Activated CD8-positive, alpha-beta T cell treated with anti-CD3 and anti-CD28 coated beads for 36 hours (primary cell): ENCODE measurements at regions of chr9 and their contacts with region 1.

Region 1: GRCh38 chr9:34603610-34604231 is 8.2 kb downstream of the RPP25L start:
- DNase-seq: peak; percentile 89
- ATAC-seq: peak; percentile 98
- H3K4me3 Mint-ChIP-seq: no peak overlapping the region
- H3K27ac Mint-ChIP-seq: no peak overlapping the region
- H3K4me1 Mint-ChIP-seq: no peaks in the 10 kb centered on the region
- H3K27me3 Mint-ChIP-seq: no peaks in the 10 kb centered on the region
- CTCF ChIP-seq: peak; percentile 82

Region 2: DNA sequence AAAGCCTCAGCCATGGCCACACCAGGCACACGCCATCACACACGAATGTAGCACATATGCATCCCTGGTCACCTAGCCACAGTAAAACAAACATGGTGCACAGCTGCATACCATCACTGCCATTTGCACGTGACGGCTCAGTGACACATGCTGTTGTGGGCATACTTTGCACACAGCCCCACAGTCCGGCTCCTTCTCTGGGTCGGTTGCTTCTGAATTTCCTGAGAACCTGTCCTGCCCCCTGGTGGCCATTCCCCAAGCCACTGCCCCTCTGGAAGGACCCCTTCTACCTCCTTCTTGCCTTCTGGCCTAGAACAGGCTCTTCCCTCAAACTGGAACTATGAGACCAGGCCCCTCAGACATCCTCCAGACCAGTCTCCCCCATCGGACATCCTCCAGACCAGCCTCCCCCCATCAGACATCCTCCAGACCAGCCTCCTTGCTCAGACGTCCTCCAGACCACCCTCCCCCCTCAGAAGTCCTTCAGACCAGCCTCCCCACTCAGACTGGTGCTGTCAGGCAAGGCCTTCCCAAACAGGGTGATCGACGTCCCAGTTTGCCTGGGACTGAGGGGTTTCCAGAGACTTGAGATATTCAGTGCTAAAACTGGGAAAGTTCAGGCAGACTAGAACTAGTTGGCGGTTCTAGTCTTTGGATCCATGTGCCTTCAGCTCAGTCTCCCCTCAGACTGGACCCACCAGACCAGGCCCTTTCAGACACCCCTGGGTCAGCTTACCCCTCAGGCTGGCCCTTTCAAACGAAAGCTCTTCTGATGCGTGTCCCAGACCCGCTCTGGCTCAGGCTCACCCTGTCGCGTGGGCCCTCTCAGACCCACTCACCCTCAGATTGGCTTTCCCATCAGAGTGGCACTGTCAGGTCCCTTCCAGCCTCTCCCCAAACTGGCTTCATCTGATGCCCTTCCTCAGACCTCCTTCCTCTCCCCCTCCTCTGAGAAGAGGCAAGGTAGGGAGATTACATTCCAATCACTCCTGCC is 56.6 kb before region 1 on chr9:
- CTCF ChIA-PET with region 1: interaction called, 10 read pairs
- POLR2A ChIA-PET with region 1: no interaction called
- intact Hi-C with region 1: no loop called
- DNase-seq: peak; percentile 89
- ATAC-seq: peak; percentile 83
- H3K4me3 Mint-ChIP-seq: no peak overlapping the region
- H3K27ac Mint-ChIP-seq: no peak overlapping the region
- H3K4me1 Mint-ChIP-seq: no peaks in the 10 kb centered on the region
- H3K27me3 Mint-ChIP-seq: peaks cover 15% of the 10 kb centered on the region
- CTCF ChIP-seq: peak; percentile 49

Region 3: GRCh38 chr9:34578241-34579103 is 25.2 kb before region 1 on chr9:
- CTCF ChIA-PET with region 1: interaction called, 19 read pairs
- POLR2A ChIA-PET with region 1: no interaction called
- intact Hi-C with region 1: no loop called
- DNase-seq: peak; percentile 30
- ATAC-seq: peak; percentile 74
- H3K4me3 Mint-ChIP-seq: no peak overlapping the region
- H3K27ac Mint-ChIP-seq: no peak overlapping the region
- H3K4me1 Mint-ChIP-seq: peaks cover 6% of the 10 kb centered on the region
- H3K27me3 Mint-ChIP-seq: peaks cover 48% of the 10 kb centered on the region
- CTCF ChIP-seq: no peak

Region 4: GRCh38 chr9:34620061-34620994 is 16.6 kb after region 1 on chr9 and contains the start of gene DCTN3:
- CTCF ChIA-PET with region 1: interaction called, 23 read pairs
- POLR2A ChIA-PET with region 1: interaction called, 4 read pairs
- intact Hi-C with region 1: no loop called
- DNase-seq: peak; percentile 97
- ATAC-seq: peak; percentile 99
- H3K4me3 Mint-ChIP-seq: peak within 1 kb of the TSS; percentile 91
- H3K27ac Mint-ChIP-seq: peak within 1 kb of the TSS; percentile 75
- H3K4me1 Mint-ChIP-seq: peaks cover 26% of the 10 kb centered on the region
- H3K27me3 Mint-ChIP-seq: peaks cover 17% of the 10 kb centered on the region
- CTCF ChIP-seq: no peak
- total RNA-seq, gene DCTN3: 52.7 to 61.0 TPM

Region 5: GRCh38 chr9:34690983-34691935 is 87.5 kb after region 1 on chr9 and contains the start of gene CCL19:
- CTCF ChIA-PET with region 1: no interaction called
- POLR2A ChIA-PET with region 1: no interaction called
- intact Hi-C with region 1: no loop called
- DNase-seq: no peak
- ATAC-seq: no peak
- H3K4me3 Mint-ChIP-seq: no peak within 1 kb of the TSS
- H3K27ac Mint-ChIP-seq: no peak within 1 kb of the TSS
- H3K4me1 Mint-ChIP-seq: no peaks in the 10 kb centered on the region
- H3K27me3 Mint-ChIP-seq: peaks cover 4% of the 10 kb centered on the region
- CTCF ChIP-seq: no peak
- total RNA-seq, gene CCL19: not detected

Region 6: GRCh38 chr9:34884732-34885131 is 281.0 kb after region 1 on chr9:
- CTCF ChIA-PET with region 1: no interaction called
- POLR2A ChIA-PET with region 1: no interaction called
- intact Hi-C with region 1: no loop called
- DNase-seq: peak; percentile 72
- ATAC-seq: peak; percentile 93
- H3K4me3 Mint-ChIP-seq: no peak overlapping the region
- H3K27ac Mint-ChIP-seq: peak overlapping the region; percentile 58
- H3K4me1 Mint-ChIP-seq: no peaks in the 10 kb centered on the region
- H3K27me3 Mint-ChIP-seq: peaks cover 10% of the 10 kb centered on the region
- CTCF ChIP-seq: no peak